Sigmoid colon (tissue), 7 donors: ENCODE measurements at regions of chr1 and their contacts with region 1.

Region 1: GRCh38 chr1:100132566-100133477 is at the starts of genes SASS6 and TRMT13:
- DNase-seq: peak; percentile 98
- H3K4me3 ChIP-seq: peak within 1 kb of the TSS; percentile 58 to 88 (median 78)
- H3K27ac ChIP-seq: peak within 1 kb of the TSS; percentile 69 to 83 (median 76)
- H3K4me1 ChIP-seq: peaks cover 0 to 27% (median 21%) of the 10 kb centered on the region in 4 donors
- H3K27me3 ChIP-seq: no peaks in the 10 kb centered on the region
- CTCF ChIP-seq: no peak
- EP300 ChIP-seq: peak in 1 of 4 donors; percentile 40
- POLR2A ChIP-seq: no peak
- total RNA-seq, gene SASS6: 2.7 to 7.1 (median 4.9) TPM
- total RNA-seq, gene TRMT13: 17.4 to 26.4 (median 24.8) TPM

Region 2: DNA sequence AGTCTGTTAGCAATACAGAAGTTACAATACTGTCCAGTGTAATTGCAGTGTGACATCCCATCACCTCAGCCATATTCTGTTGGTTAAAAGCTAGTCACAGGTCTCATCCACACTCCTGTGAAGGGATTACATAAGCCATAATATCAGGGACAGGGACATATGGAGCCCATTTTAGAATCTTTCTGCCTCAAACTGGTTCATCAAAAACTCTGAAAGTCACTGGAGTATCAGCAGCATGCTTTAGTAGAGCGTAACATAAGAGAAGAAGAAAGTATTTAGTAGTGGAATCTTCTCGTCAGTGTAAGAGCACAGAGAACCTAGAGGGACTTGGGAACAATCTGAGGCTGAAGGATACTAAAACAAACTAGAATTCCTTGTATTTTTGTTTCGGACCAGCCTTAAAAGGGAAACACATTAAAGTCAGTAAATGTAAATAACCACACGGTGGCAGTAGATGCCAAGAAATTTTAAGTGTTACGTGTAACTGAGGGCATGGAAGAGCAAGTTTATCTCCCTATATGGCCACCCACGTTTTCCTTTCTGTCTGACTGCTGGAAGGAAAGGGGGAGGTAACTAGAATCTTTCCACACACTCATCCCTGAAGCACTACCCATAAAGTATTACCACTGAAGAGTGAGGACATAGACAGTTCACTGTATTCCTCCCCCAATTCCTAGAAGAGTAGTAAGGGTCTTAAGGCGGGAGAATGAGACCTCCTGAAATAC is 324.3 kb before region 1 on chr1:
- intact Hi-C with region 1: loop called (anchors 2 kb)
- DNase-seq: peak; percentile 69
- H3K4me3 ChIP-seq: peak overlapping the region in 3 of 4 donors; percentile 8 to 18 (median 16)
- H3K27ac ChIP-seq: peak overlapping the region; percentile 69 to 85 (median 82)
- H3K4me1 ChIP-seq: peaks cover 0 to 13% (median 6%) of the 10 kb centered on the region in 4 donors
- H3K27me3 ChIP-seq: no peaks in the 10 kb centered on the region
- CTCF ChIP-seq: peak; percentile 32 to 76 (median 61)
- EP300 ChIP-seq: peak in 1 of 4 donors; percentile 65
- POLR2A ChIP-seq: peak in 1 of 2 donors; percentile 30

Region 3: DNA sequence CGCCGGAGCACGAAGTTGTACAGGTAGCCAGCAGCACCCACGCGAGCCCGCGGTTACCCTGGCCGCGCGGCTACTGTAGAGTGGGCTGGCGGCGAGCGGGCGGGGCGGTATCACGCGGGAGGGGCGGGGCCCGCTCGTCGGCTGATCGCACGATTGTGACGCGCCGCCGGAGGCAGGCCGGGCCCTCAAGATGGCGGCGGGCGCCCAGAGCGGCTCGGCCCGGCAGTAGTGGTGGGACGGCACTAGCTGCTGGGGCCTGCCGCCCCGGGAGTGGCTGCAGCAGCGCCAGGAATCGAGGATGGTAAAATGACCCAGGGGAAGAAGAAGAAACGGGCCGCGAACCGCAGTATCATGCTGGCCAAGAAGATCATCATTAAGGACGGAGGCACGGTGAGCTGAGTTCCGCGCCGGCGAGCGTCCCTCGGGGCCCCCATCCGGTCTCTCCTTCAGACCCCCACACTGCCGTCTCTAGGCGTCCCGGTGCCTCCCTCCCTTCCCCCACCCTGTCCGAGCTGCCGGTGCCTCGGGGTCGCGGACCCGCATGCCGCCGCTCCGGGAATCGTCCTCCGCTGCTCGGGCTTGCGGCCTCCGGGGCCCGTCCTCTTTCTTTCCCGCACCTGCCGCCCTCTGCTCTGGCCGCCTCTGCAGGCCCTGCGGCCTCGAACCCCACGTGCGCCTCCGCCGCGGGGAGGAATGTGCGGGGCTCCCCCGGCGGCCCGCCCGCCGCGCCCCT is 94.7 kb before region 1 on chr1:
- intact Hi-C with region 1: loop called (anchors 2 kb)
- DNase-seq: peak; percentile 94
- H3K4me3 ChIP-seq: peak overlapping the region; percentile 76 to 91 (median 82)
- H3K27ac ChIP-seq: peak overlapping the region; percentile 96 to 99 (median 98)
- H3K4me1 ChIP-seq: peaks cover 0 to 44% (median 43%) of the 10 kb centered on the region in 4 donors
- H3K27me3 ChIP-seq: no peaks in the 10 kb centered on the region
- CTCF ChIP-seq: no peak
- EP300 ChIP-seq: peak in 1 of 4 donors; percentile 4
- POLR2A ChIP-seq: peak; percentile 87 to 90

Region 4: DNA sequence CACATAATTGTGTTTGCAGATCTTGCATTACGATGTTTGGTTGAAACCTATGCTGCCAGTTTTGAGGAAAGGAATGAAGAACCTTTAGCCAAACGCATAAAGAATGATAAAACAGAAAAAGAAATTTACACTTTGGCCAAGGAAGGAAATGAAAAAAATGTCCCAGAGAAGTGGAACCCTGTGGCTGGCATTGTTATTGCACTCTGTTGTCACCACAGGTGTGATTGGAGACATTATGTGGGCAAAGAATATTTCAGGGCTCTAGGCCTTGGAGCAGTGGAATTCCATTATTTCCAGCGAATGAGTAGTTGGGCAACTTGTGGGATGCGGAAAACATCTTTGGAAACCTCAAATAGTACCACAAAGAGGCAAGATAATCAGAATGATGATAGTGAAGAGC is 15.1 kb after region 1 on chr1:
- intact Hi-C with region 1: no loop called
- DNase-seq: no peak
- H3K4me3 ChIP-seq: no peak overlapping the region
- H3K27ac ChIP-seq: no peak overlapping the region
- H3K4me1 ChIP-seq: peaks cover 0 to 5% (median 0%) of the 10 kb centered on the region in 4 donors
- H3K27me3 ChIP-seq: no peaks in the 10 kb centered on the region
- CTCF ChIP-seq: no peak
- EP300 ChIP-seq: no peak
- POLR2A ChIP-seq: no peak

Region 5: GRCh38 chr1:100188617-100189016 is 55.8 kb after region 1 on chr1:
- intact Hi-C with region 1: loop called (anchors 10 kb)
- DNase-seq: peak; percentile 67
- H3K4me3 ChIP-seq: no peak overlapping the region
- H3K27ac ChIP-seq: peak overlapping the region in 3 of 4 donors; percentile 68 to 77 (median 72)
- H3K4me1 ChIP-seq: peaks cover 0 to 29% (median 22%) of the 10 kb centered on the region in 4 donors
- H3K27me3 ChIP-seq: no peaks in the 10 kb centered on the region
- CTCF ChIP-seq: no peak
- EP300 ChIP-seq: no peak
- POLR2A ChIP-seq: no peak

Region 6: DNA sequence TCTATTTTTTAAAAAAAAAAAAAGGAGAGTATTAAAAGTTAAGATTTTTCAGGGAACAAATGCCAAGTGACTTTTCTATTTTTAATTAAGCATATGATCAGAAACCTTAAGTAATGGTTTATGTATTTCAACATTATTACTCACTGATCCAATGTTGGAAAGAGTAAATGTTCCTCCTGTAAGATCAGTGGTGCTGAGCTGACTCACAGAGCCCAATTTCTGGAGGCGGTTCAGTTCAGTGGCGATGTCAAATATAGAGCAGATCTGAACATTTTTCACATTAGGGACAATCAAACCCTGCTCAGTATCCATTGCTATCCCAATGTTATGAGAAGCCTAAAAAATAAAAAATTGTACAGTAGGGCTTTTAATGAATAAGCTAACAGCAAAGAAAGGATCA is 73.5 kb after region 1 on chr1:
- intact Hi-C with region 1: loop called (anchors 2 kb)
- DNase-seq: no peak
- H3K4me3 ChIP-seq: no peak overlapping the region
- H3K27ac ChIP-seq: no peak overlapping the region
- H3K4me1 ChIP-seq: peaks cover 0 to 22% (median 8%) of the 10 kb centered on the region in 4 donors
- H3K27me3 ChIP-seq: no peaks in the 10 kb centered on the region
- CTCF ChIP-seq: no peak
- EP300 ChIP-seq: no peak
- POLR2A ChIP-seq: no peak

Region 7: DNA sequence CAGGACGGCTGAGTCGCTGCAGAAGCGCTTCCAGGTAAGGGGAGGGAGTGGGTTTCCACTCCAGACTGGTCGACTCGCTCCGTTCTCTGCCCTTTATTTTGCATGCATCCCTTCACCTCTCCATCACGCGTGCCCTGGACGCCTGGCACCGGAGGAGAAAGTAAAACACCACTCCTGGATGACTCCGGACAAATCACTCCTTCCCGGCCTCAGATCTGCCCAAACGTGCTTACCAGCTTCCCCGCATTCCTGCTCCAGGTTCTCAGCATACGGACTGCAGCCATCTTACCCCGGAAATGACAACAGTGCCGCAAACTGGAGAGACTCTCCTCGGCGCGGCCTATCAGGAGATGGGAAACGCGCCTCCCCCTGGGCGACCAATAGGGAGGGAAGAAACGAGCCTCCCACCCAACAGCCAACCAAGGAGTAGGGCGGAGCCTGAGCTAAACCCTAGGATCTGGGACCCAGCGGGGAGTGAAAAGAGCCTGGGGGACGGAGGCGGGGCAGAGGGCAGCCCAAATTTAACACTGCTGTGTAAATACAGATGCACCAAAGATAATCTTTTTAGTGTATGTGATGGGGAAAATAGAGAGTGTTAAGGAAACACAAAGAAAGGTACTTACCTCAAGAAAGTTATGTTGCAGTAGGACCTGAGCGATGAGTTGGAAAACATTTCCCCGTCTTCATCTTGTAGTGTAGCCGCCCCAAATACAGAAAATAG is 116.9 kb after region 1 on chr1 and contains the start of gene DBT:
- intact Hi-C with region 1: loop called (anchors 5 kb)
- DNase-seq: peak; percentile 99
- H3K4me3 ChIP-seq: peak within 1 kb of the TSS; percentile 81 to 91 (median 88)
- H3K27ac ChIP-seq: peak within 1 kb of the TSS; percentile 87 to 94 (median 93)
- H3K4me1 ChIP-seq: peaks cover 0 to 16% (median 8%) of the 10 kb centered on the region in 4 donors
- H3K27me3 ChIP-seq: no peaks in the 10 kb centered on the region
- CTCF ChIP-seq: no peak
- EP300 ChIP-seq: no peak
- POLR2A ChIP-seq: peak; percentile 80 to 84
- total RNA-seq, gene DBT: 8.8 to 14.3 (median 11.1) TPM

Region 8: DNA sequence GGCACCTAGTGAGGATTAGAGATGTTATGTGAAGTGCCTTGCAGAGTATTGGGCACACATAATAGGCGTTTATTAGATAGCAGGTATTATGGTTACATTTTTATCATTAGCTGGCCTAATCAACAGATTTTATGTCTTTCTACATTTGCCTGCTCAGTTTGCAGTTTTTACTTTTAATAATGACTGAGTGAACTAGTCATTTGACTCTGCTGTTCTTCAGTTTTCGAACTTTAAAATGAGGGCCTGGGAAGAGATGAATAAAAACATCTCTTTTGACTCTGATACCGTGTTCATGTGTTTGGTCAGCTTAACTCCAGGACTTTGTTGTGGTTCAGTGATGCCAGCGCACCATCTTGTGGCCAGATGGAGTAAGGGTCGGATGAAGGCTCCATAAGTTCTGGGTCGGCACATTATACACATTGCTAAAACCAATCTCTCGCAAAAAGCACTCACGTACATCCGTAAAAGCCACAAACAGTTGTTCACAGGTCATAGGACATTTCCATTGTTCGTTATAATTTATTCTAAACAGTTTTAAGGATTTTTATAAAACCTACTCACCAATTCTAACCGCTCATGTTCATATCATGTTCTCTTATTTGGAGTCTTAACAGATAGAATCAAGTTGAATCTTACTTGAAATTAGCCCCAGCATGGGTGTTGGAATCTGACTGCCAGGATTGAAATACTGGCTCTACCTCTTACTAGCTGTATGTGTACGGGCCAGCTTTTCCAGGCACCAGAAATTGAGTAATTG is 326.7 kb after region 1 on chr1:
- intact Hi-C with region 1: loop called (anchors 5 kb)
- DNase-seq: peak; percentile 86
- H3K4me3 ChIP-seq: no peak overlapping the region
- H3K27ac ChIP-seq: peak overlapping the region; percentile 18 to 73 (median 60)
- H3K4me1 ChIP-seq: peaks cover 0 to 13% (median 8%) of the 10 kb centered on the region in 4 donors
- H3K27me3 ChIP-seq: no peaks in the 10 kb centered on the region
- CTCF ChIP-seq: peak; percentile 84 to 87 (median 86)
- EP300 ChIP-seq: no peak
- POLR2A ChIP-seq: no peak